Panc1 (cell line): ENCODE measurements at regions of chr17 and their contacts with region 1.

Region 1: DNA sequence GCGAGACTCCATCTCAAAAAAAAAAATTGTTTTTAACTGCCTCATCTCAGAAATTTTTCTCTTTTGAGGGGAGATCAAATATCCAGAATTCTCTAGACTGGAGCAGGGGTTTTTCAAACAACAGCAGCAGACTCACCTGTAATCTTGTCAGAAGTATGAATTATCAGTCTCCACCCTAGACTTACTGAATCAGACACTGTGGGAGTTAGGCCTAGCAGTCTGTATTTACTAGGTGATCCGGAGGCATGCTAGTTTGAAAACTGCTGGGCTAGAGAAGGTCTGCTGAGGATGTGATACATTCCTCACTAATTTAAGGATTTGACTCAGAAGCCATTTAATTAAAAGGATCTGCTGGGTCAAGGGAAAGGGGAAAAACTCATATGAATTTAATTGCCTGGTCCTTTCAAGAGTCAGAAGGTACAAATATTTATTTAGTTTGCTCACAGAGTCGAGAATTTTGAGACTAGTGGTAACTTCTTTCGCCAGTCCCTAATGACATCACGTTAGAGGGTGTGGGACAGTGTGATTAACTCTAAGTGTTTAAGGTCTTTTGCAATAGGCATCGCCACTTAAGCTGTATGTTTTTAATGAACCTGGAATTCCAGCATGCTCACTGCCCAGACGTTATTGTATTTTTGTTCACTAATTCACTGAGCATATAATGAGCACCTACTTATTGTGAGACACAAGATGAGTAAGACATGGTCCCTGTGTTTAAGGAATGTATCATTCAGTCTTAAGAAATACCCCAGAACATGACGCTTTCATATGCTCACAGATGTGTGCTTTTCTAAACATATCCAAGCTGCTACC is 14.2 kb downstream of the ATP6V0A1 start:
- DNase-seq: no peak
- ATAC-seq: no peak
- H3K4me3 ChIP-seq: no peak overlapping the region
- H3K27ac ChIP-seq: no peak overlapping the region
- H3K4me1 ChIP-seq: no peaks in the 10 kb centered on the region
- H3K27me3 ChIP-seq: no peaks in the 10 kb centered on the region
- CTCF ChIP-seq: no peak

Region 2: DNA sequence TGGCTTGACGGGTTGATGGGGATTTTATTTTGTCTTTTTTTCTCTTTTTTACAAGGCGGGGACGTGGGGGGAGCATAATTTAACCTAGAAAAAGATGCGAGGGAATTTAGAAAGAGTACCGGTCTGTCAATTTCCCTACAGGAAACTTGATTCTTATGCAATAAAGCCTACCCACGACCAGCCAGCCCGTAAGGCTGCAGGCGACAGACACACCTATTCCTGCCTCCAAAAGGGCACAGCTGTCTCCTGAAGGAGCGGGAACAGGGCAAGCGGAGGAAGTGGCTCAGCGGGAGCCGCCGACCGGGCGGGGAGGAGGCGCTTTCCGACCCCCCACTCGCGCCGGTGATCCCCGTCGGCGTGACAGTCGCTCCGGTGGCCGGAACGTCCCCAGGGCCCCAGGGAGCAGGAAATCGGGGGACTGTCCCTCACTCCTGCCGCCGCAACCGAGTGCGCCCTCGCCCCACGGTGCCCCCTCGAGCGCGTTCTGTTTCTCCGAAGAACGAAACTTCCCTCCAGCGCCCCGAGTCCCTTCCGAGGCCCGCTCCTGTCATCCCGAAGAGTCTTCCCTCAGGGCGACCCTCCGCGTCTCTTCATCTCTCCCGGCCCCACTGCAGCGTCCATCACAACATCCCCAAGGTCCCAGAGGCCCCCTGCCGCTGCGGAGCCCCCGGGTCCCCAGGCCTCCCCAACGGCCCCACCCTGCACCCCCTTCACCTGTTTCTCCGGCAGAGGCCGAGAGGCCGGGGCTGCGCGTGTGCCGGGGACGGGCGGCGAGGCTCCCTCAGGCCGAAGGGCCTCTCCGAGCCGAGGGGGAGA is 85.1 kb before region 1 on chr17:
- CTCF ChIA-PET with region 1: no interaction called
- POLR2A ChIA-PET with region 1: no interaction called
- in situ Hi-C with region 1: no loop called
- intact Hi-C with region 1: no loop called
- DNase-seq: no peak
- ATAC-seq: no peak; the same call in 1 of the 2 replicates
- H3K4me3 ChIP-seq: peak overlapping the region; percentile 66 to 93
- H3K27ac ChIP-seq: peak overlapping the region; percentile 91
- H3K4me1 ChIP-seq: peaks cover 28% of the 10 kb centered on the region
- H3K27me3 ChIP-seq: no peaks in the 10 kb centered on the region
- CTCF ChIP-seq: no peak

Region 3: GRCh38 chr17:42618442-42619150 is 145.7 kb after region 1 on chr17:
- CTCF ChIA-PET with region 1: no interaction called
- POLR2A ChIA-PET with region 1: no interaction called
- in situ Hi-C with region 1: no loop called
- intact Hi-C with region 1: no loop called
- DNase-seq: no peak
- ATAC-seq: peak; percentile 93
- H3K4me3 ChIP-seq: no peak overlapping the region
- H3K27ac ChIP-seq: 0 out of 2 replicates have a peak overlapping the region, but pooled peaks have one; percentile 13
- H3K4me1 ChIP-seq: peaks cover 7% of the 10 kb centered on the region
- H3K27me3 ChIP-seq: no peaks in the 10 kb centered on the region
- CTCF ChIP-seq: peak; percentile 18; the same call in 1 of the 2 replicates

Region 4: DNA sequence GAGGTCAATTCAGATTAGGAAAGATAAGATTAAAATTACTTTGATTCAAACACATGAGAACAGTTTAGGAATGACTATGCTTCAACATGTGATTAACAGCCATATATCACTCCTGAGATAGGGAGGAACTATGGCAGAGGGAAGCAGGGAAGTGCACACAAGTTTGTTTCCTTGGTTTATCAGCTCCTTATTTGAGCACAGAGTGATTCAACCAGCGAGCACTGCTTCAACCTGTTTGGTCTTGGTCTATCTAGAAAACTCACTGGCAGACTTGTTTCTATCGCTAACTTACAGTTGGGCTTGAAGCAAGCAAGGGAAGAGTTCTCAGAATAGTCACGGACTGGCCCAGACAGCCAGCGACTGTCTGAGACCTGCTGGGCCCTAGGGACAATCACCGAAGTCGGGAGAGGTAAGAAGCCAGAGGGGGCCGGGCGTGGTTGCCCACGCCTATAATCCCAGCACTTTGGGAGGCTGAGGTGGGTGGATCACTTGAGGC is 160.1 kb after region 1 on chr17:
- CTCF ChIA-PET with region 1: no interaction called
- POLR2A ChIA-PET with region 1: interaction called, 23 read pairs
- in situ Hi-C with region 1: no loop called
- intact Hi-C with region 1: no loop called
- DNase-seq: no peak
- ATAC-seq: no peak
- H3K4me3 ChIP-seq: no peak overlapping the region
- H3K27ac ChIP-seq: no peak overlapping the region
- H3K4me1 ChIP-seq: no peaks in the 10 kb centered on the region
- H3K27me3 ChIP-seq: no peaks in the 10 kb centered on the region
- CTCF ChIP-seq: no peak